ENCODE measurements at regions of chr20 and their contacts with region 1.

Region 1: DNA sequence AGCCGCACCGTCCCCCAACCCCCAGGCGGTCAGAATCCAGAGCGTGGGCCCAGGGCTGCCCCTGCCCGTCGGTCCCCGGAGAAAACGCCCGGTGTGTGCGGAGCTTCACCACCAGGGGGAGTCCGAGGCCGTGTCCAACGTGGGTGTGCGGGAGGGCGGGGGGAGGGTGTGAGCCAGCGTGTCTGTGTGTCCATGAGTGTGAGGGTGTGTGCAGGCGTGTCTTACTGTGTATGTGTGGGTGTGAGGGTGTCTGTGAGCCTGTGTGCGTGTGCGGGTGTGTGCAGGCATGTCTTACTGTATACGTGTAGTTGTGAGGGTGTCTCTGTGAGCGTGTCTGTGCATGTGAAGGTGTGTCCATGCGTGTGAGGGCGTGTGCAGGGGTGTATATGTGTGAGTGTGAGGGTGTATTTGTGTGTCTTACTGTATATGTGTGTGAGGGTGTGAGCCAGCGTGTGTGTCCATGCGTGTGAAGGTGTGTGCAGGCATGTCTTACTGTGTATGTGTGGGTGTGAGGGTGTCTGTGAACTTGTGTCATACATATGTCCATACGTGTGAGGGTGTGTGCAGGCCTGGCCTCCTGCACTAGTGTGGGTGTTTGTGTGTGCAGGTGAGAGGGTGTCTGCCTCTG is 24.6 kb upstream of the GATA5 start:
- DNase-seq: peak; percentile 80
- H3K4me3 ChIP-seq: no peak overlapping the region
- H3K27ac ChIP-seq: no peak overlapping the region
- H3K4me1 ChIP-seq: peaks cover 18% of the 10 kb centered on the region
- H3K27me3 ChIP-seq: no peaks in the 10 kb centered on the region
- CTCF ChIP-seq: peak; percentile 90 to 95 (median 93)
- POLR2A ChIP-seq: no peak

Region 2: DNA sequence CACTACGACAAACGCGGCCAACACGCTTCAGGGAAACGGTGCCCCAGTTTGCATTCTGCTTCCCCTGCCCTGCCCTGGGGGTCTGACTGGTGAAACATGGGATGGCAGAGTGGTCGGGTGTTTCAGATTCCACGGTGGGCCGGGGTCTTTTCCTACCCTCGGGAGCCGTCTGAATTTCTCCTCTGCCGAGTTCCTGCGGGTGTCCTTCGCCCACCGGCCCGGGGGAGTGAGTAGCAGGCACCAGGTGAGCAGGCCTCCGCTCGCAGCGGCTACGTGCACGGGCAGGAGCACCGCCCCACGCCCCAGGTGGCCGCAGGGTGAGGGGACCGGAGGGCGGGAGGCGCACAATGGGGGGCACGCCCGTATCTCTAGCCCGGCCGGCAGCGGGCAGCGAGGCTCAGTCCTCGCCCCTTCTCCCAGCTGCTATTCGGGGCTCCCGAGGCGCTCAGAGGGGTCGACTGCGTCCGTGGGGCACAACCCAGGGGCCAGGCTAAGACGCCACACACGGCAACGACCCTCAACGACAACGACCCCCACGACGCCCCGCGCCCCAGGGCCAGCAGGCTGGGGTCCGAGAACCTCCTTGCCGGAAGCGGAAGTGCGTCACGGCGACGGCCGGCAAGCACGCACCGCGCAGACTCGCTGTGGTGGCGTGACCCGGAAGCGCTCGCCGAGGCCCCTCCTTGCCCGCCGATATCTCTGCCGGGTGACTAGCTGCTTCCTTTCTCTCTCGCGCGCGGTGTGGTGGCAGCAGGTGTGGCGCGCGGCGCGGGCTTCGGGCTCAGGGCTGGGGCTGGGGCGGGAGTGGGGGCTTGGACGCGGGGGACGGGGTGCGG is 113.8 kb before region 1 on chr20 and contains the start of gene RPS21:
- intact Hi-C with region 1: no loop called
- DNase-seq: peak; percentile 96
- H3K4me3 ChIP-seq: peak within 1 kb of the TSS; percentile 85 to 95
- H3K27ac ChIP-seq: peak within 1 kb of the TSS; percentile 82 to 90
- H3K4me1 ChIP-seq: peaks cover 37% of the 10 kb centered on the region
- H3K27me3 ChIP-seq: no peaks in the 10 kb centered on the region
- CTCF ChIP-seq: peak in 1 of 3 experiments; percentile 11
- POLR2A ChIP-seq: peak; percentile 23
- total RNA-seq, gene RPS21: 548 to 1,387 TPM

Region 3: DNA sequence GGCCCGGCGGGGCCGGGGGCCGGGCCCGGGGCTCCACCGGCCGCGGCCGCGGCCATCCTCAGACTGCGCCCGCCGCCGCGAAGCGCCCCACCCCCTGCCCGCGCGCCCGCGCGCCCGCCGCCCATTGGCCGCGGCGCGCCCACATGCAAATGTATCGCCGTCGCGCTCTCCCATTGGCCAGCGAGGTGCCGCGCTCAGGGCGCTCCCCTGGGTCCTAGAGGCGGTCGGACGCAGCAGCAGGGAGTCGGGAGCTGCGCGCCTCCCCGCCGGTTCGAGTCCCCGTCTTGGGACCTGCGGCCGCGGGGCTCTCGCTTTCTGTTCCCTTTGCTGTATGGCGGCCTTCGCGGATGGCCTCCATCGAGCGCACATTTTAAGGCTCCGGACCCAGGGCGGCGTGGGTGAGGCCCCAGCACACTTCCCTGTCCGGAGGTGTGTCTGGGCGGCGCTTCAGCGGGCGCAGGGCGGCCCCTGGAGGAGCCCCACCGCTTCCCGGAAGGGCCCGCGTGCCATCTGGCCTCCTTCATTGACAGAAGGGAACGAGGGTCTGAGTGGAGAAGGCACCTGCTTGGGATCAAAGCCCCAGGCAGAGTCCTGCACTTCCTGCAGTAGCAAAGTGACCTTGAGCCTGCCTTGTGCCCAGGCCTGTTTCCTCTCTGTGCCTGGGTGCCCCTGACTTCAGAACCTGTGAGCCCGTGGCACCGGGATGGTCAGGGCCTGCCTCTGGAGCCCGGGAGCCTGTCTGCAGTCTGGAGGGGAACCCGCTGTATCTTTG is 92.9 kb before region 1 on chr20 and contains the start of gene CABLES2:
- intact Hi-C with region 1: no loop called
- DNase-seq: peak; percentile 96
- H3K4me3 ChIP-seq: peak within 1 kb of the TSS; percentile 62 to 64
- H3K27ac ChIP-seq: peak within 1 kb of the TSS in 1 of 2 donors; percentile 64
- H3K4me1 ChIP-seq: peaks cover 31% of the 10 kb centered on the region
- H3K27me3 ChIP-seq: no peaks in the 10 kb centered on the region
- CTCF ChIP-seq: peak in 2 of 3 experiments; percentile 40 to 67
- POLR2A ChIP-seq: no peak
- total RNA-seq, gene CABLES2: 51.0 to 58.6 TPM

Region 4: GRCh38 chr20:62473717-62474603 is 26.4 kb before region 1 on chr20:
- intact Hi-C with region 1: no loop called
- DNase-seq: no peak
- H3K4me3 ChIP-seq: peak overlapping the region; percentile 41 to 70
- H3K27ac ChIP-seq: peak overlapping the region; percentile 24 to 55
- H3K4me1 ChIP-seq: no peaks in the 10 kb centered on the region
- H3K27me3 ChIP-seq: no peaks in the 10 kb centered on the region
- CTCF ChIP-seq: no peak
- POLR2A ChIP-seq: no peak

Region 5: DNA sequence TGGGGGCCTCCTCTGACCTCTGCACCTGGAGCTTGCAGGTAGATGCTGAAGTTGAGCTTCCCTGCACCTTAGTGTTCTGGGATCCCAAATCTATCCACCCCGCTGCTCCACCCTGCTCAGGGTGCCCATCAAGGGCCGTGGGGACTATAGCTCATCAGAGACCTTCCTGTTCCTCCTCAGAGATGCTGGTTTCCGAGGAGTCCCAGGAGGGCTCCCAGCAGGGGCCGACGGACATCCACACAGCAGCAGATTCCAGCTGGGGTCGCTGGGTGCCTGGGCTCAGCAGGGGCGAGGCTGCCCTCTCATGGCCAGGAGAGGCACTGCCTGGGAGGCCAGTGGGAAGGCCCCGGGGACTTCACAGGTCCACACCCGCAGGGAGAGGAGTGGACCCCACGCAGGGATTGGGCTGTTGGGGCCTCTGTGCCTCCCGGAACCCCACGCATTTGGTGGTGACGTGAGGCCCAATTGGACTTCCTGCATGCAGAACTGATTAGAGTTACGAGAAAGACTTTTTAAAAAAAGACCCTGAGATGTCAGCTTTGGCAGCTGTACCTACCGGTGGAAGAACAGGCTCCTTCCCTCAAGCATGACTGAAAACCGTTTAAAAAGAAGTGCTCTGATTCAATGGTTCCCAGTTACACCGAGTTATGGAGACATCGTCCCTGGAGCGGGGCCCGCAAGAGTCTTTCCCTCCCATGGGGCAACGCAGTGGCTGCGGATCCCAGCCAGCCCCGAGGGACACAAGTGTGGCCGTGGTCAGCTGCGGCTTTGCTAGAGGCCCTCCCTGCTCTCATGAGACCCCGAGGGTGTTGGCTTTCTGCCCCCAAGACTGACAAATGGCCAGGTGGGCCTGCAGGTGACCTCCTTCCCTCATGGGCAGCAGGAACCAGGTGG is 116.6 kb after region 1 on chr20:
- intact Hi-C with region 1: loop called (anchors 5 kb)
- DNase-seq: peak; percentile 82
- H3K4me3 ChIP-seq: no peak overlapping the region
- H3K27ac ChIP-seq: peak overlapping the region; percentile 24 to 50
- H3K4me1 ChIP-seq: peaks cover 14% of the 10 kb centered on the region
- H3K27me3 ChIP-seq: no peaks in the 10 kb centered on the region
- CTCF ChIP-seq: peak; percentile 51 to 86 (median 76)
- POLR2A ChIP-seq: no peak